ENCODE measurements at regions of chr21 and their contacts with region 1.

Region 1: GRCh38 chr21:33608559-33608958 is 20.1 kb upstream of the DONSON start:
- DNase-seq: no peak
- ATAC-seq: no peak
- H3K4me3 ChIP-seq: no peak overlapping the region
- H3K4me3 Mint-ChIP-seq: no peak overlapping the region
- H3K27ac ChIP-seq: no peak overlapping the region
- H3K27ac Mint-ChIP-seq: no peak overlapping the region
- H3K4me1 ChIP-seq: no peaks in the 10 kb centered on the region
- H3K4me1 Mint-ChIP-seq: peaks cover 3% of the 10 kb centered on the region
- H3K27me3 ChIP-seq: no peaks in the 10 kb centered on the region
- H3K27me3 Mint-ChIP-seq: no peaks in the 10 kb centered on the region
- CTCF ChIP-seq: no peak

Region 2: GRCh38 chr21:32392880-32393676 is 1215.5 kb before region 1 on chr21 and contains the start of gene URB1:
- CTCF ChIA-PET with region 1: no interaction called
- POLR2A ChIA-PET with region 1: no interaction called
- intact Hi-C with region 1: no loop called
- DNase-seq: peak; percentile 89 to 98 (median 94)
- ATAC-seq: peak; percentile 97
- H3K4me3 ChIP-seq: peak within 1 kb of the TSS; percentile 94 to 98
- H3K4me3 Mint-ChIP-seq: peak within 1 kb of the TSS; percentile 89
- H3K27ac ChIP-seq: peak within 1 kb of the TSS; percentile 65 to 83
- H3K27ac Mint-ChIP-seq: peak within 1 kb of the TSS; percentile 80
- H3K4me1 ChIP-seq: peaks cover 13% of the 10 kb centered on the region
- H3K4me1 Mint-ChIP-seq: peaks cover 50% of the 10 kb centered on the region
- H3K27me3 ChIP-seq: no peaks in the 10 kb centered on the region
- H3K27me3 Mint-ChIP-seq: peaks cover 7% of the 10 kb centered on the region
- CTCF ChIP-seq: no peak
- total RNA-seq, gene URB1: 5.4 to 5.9 TPM

Region 3: DNA sequence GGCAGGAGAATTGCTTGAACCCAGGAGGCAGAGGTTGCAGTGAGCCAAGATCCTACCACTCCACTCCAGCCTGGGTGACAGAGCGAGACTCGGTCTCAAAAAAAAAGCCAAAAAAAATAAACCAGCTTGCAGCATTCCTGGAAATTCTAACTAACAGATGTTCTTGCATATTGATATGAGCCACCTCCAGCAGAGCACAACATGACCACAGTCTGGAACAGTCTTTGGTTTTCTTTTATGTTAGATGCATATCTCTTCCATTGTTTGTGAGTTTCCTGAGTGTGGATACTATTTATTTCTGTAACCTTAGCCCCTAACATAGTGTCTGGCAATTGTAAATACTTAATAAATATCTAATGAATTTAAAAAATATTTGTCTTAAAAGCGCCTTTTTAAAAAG is 259.9 kb before region 1 on chr21:
- CTCF ChIA-PET with region 1: interaction called, 3 read pairs
- POLR2A ChIA-PET with region 1: no interaction called
- intact Hi-C with region 1: loop called in 1 of 2 experiments (anchors 5 kb)
- DNase-seq: no peak
- ATAC-seq: no peak
- H3K4me3 ChIP-seq: no peak overlapping the region
- H3K4me3 Mint-ChIP-seq: no peak overlapping the region
- H3K27ac ChIP-seq: no peak overlapping the region
- H3K27ac Mint-ChIP-seq: no peak overlapping the region
- H3K4me1 ChIP-seq: peaks cover 15% of the 10 kb centered on the region
- H3K4me1 Mint-ChIP-seq: peaks cover 16% of the 10 kb centered on the region
- H3K27me3 ChIP-seq: no peaks in the 10 kb centered on the region
- H3K27me3 Mint-ChIP-seq: no peaks in the 10 kb centered on the region
- CTCF ChIP-seq: no peak

Region 4: DNA sequence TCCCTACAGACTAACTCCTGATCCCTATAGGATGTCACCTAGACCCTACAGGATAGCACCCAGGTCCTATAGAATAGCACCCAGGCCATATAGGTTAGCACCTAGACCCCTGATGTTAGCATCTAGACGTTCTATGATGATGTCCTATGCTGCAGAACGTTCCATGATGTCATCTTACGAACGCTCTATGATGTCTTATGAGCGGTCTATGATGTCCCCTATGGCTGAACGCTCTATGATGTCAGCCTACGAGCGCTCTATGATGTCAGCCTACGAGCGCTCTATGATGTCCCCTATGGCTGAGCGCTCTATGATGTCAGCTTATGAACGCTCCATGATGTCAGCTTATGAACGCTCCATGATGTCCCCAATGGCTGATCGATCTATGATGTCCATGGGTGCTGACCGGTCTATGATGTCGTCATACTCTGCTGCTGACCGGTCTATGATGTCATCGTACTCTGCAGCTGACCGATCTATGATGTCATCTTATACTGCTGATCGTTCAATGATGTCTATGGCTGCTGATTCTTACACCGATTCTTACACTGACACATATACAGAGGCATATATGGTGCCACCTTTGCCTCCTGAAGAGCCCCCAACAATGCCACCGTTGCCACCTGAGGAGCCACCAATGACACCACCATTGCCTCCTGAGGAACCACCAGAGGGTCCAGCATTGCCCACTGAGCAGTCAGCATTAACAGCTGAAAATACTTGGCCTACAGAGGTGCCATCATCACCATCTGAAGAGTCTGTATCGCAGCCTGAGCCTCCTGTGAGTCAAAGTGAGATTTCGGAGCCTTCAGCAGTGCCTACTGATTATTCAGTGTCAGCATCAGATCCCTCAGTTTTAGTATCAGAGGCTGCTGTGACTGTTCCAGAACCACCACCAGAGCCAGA is 56.2 kb before region 1 on chr21:
- CTCF ChIA-PET with region 1: interaction called, 11 read pairs
- POLR2A ChIA-PET with region 1: no interaction called
- intact Hi-C with region 1: no loop called
- DNase-seq: no peak
- ATAC-seq: peak; percentile 37
- H3K4me3 ChIP-seq: no peak overlapping the region
- H3K4me3 Mint-ChIP-seq: no peak overlapping the region
- H3K27ac ChIP-seq: no peak overlapping the region
- H3K27ac Mint-ChIP-seq: no peak overlapping the region
- H3K4me1 ChIP-seq: peaks cover 14% of the 10 kb centered on the region
- H3K4me1 Mint-ChIP-seq: peaks cover 66% of the 10 kb centered on the region
- H3K27me3 ChIP-seq: no peaks in the 10 kb centered on the region
- H3K27me3 Mint-ChIP-seq: no peaks in the 10 kb centered on the region
- CTCF ChIP-seq: no peak

Region 5: GRCh38 chr21:33588485-33589335 is 19.8 kb before region 1 on chr21 and contains the start of gene DONSON:
- CTCF ChIA-PET with region 1: interaction called, 23 read pairs
- POLR2A ChIA-PET with region 1: interaction called, 4 read pairs
- intact Hi-C with region 1: loop called in 1 of 2 experiments (anchors 2 kb)
- DNase-seq: peak; percentile 72 to 94 (median 87)
- ATAC-seq: peak; percentile 94
- H3K4me3 ChIP-seq: peak within 1 kb of the TSS; percentile 82 to 91
- H3K4me3 Mint-ChIP-seq: peak within 1 kb of the TSS; percentile 95
- H3K27ac ChIP-seq: peak within 1 kb of the TSS; percentile 53 to 61
- H3K27ac Mint-ChIP-seq: peak within 1 kb of the TSS; percentile 87
- H3K4me1 ChIP-seq: peaks cover 14% of the 10 kb centered on the region
- H3K4me1 Mint-ChIP-seq: peaks cover 16% of the 10 kb centered on the region
- H3K27me3 ChIP-seq: no peaks in the 10 kb centered on the region
- H3K27me3 Mint-ChIP-seq: no peaks in the 10 kb centered on the region
- CTCF ChIP-seq: no peak
- total RNA-seq, gene DONSON: 11.0 to 11.9 TPM

Region 6: GRCh38 chr21:33619726-33620125 is 11.2 kb after region 1 on chr21:
- CTCF ChIA-PET with region 1: interaction called, 19 read pairs
- POLR2A ChIA-PET with region 1: no interaction called
- intact Hi-C with region 1: no loop called
- DNase-seq: no peak
- ATAC-seq: no peak
- H3K4me3 ChIP-seq: no peak overlapping the region
- H3K4me3 Mint-ChIP-seq: no peak overlapping the region
- H3K27ac ChIP-seq: no peak overlapping the region
- H3K27ac Mint-ChIP-seq: no peak overlapping the region
- H3K4me1 ChIP-seq: no peaks in the 10 kb centered on the region
- H3K4me1 Mint-ChIP-seq: no peaks in the 10 kb centered on the region
- H3K27me3 ChIP-seq: no peaks in the 10 kb centered on the region
- H3K27me3 Mint-ChIP-seq: no peaks in the 10 kb centered on the region
- CTCF ChIP-seq: no peak

Measured in CD8-positive, alpha-beta T cell (primary cell).